HCT116 (cell line): ENCODE measurements at regions of chr14 and their contacts with region 1.

Region 1: DNA sequence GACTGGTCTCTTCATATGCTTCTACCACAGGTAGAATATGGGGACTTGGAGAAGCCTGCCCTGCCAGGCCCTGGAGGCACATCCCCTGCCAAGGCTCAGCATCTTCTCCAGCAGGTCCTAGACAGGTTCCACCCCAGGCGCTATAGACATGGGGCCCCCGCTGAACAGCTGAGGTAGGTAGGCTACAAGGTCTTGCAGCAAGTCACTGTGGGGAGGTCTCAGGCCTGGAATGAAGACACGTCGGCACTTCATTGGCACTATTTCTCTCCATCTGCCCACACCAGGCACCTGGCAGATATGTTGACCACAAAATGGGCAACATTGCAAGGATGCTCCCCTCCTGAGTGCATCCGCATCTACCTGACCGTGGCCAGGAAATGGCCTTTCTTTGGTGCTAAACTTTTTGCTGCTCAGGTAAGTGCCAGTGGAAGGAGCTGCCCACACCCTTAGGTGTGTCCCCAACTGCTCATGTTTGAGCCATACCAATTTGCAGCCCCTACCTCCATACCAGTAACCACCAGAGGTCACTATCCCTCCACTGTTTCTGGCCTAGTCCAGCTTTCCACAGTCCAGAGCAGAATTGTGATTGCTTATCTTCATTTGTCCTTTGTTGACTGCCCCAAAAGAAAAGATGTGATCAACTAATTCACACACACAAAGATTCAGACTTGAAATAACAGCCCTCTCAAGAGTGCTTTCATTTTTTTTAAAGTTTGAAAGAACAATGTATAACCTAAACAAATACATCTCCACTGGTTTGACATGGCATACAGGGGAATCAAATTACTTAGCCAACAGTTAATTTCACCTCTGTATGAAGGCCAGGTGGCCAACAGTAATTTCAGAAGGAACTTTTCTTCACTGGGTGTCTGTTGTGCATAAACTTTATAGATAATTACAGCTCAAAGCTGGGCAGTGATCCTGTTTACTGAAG is 16.1 kb downstream of the PIGH start:
- DNase-seq: peak; percentile 47
- ATAC-seq: peak; percentile 97
- H3K4me3 ChIP-seq: no peak overlapping the region
- H3K27ac ChIP-seq: no peak overlapping the region
- H3K4me1 ChIP-seq: no peaks in the 10 kb centered on the region
- H3K27me3 ChIP-seq: no peaks in the 10 kb centered on the region
- CTCF ChIP-seq: peak; percentile 79 to 85 (median 80)
- POLR2A ChIP-seq: no peak
- RAD21 ChIP-seq: peak; percentile 90

Region 2: DNA sequence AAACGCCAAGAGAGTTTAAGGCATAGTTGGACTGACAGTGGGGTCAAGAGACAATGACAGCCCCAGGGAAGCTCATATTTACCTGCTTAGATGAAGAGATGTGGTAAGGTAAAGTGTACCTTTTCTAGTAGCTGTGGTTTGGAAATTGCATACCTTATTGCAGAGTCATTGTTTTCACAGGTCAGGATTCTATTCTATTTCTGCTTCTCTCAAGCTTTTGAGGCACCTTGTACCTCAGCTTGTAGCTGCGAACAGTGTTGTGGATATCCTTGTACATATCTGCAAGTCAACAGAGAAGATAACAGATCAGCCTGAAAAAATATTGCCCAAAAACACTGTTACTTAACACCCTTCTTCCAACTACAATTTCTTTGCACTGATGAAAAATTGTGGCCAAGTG is 272.1 kb before region 1 on chr14:
- CTCF ChIA-PET with region 1: no interaction called
- POLR2A ChIA-PET with region 1: no interaction called
- RAD21 ChIA-PET with region 1: no interaction called
- intact Hi-C with region 1: no loop called
- DNase-seq: no peak
- ATAC-seq: peak; percentile 40; the same call in 1 of the 2 replicates
- H3K4me3 ChIP-seq: no peak overlapping the region
- H3K27ac ChIP-seq: no peak overlapping the region
- H3K4me1 ChIP-seq: no peaks in the 10 kb centered on the region
- H3K27me3 ChIP-seq: no peaks in the 10 kb centered on the region
- CTCF ChIP-seq: no peak
- POLR2A ChIP-seq: no peak
- RAD21 ChIP-seq: no peak

Region 3: GRCh38 chr14:67571272-67571850 is 12.6 kb before region 1 on chr14:
- CTCF ChIA-PET with region 1: interaction called, 13 read pairs
- POLR2A ChIA-PET with region 1: no interaction called
- RAD21 ChIA-PET with region 1: no interaction called
- intact Hi-C with region 1: no loop called
- DNase-seq: peak; percentile 26
- ATAC-seq: peak; percentile 98
- H3K4me3 ChIP-seq: no peak overlapping the region
- H3K27ac ChIP-seq: no peak overlapping the region
- H3K4me1 ChIP-seq: peaks cover 0 to 4% of the 10 kb centered on the region in 2 experiments; a peak in 1 of 4 replicates
- H3K27me3 ChIP-seq: no peaks in the 10 kb centered on the region
- CTCF ChIP-seq: peak; percentile 86 to 96 (median 91)
- POLR2A ChIP-seq: no peak
- RAD21 ChIP-seq: peak; percentile 92

Region 4: GRCh38 chr14:67934008-67934481 is 350.1 kb after region 1 on chr14:
- CTCF ChIA-PET with region 1: no interaction called
- POLR2A ChIA-PET with region 1: no interaction called
- RAD21 ChIA-PET with region 1: no interaction called
- intact Hi-C with region 1: loop called (anchors 10 kb)
- DNase-seq: peak; percentile 71
- ATAC-seq: peak; percentile 97
- H3K4me3 ChIP-seq: no peak overlapping the region
- H3K27ac ChIP-seq: peak overlapping the region; percentile 49; the same call in 1 of the 2 replicates
- H3K4me1 ChIP-seq: peaks cover 5 to 18% of the 10 kb centered on the region in 2 experiments; a peak in 1 of 4 replicates
- H3K27me3 ChIP-seq: no peaks in the 10 kb centered on the region
- CTCF ChIP-seq: peak; percentile 54 to 91 (median 80)
- POLR2A ChIP-seq: no peak
- RAD21 ChIP-seq: peak; percentile 88